Right lobe of liver (tissue), 6 donors: ENCODE measurements at regions of chr2 and their contacts with region 1.

Region 1: GRCh38 chr2:38610851-38611801 is 8.4 kb upstream of the HNRNPLL start:
- DNase-seq: no peak
- ATAC-seq: peak; percentile 46 to 80 (median 54)
- H3K4me3 ChIP-seq: no peak overlapping the region
- H3K27ac ChIP-seq: no peak overlapping the region
- H3K4me1 ChIP-seq: peaks cover 0 to 8% (median 0%) of the 10 kb centered on the region in 4 donors
- H3K27me3 ChIP-seq: no peaks in the 10 kb centered on the region
- CTCF ChIP-seq: no peak
- POLR2A ChIP-seq: no peak

Region 2: GRCh38 chr2:38665854-38666555 is 54.9 kb after region 1 on chr2 and contains the start of gene GALM:
- intact Hi-C with region 1: loop called in 1 of 2 experiments (anchors 10 kb)
- DNase-seq: peak; percentile 83 to 91 (median 89)
- ATAC-seq: peak; percentile 89 to 95 (median 92)
- H3K4me3 ChIP-seq: peak within 1 kb of the TSS; percentile 52 to 85 (median 68)
- H3K27ac ChIP-seq: peak within 1 kb of the TSS; percentile 78 to 95 (median 92)
- H3K4me1 ChIP-seq: peaks cover 0 to 31% (median 13%) of the 10 kb centered on the region in 4 donors
- H3K27me3 ChIP-seq: no peaks in the 10 kb centered on the region
- CTCF ChIP-seq: no peak
- POLR2A ChIP-seq: peak; percentile 90
- total RNA-seq, gene GALM: 26.2 to 47.9 (median 36.7) TPM